ENCODE measurements at regions of chr16 and their contacts with region 1.

Region 1: GRCh38 chr16:29973384-29974246 is at the start of gene TAOK2:
- DNase-seq: peak; percentile 96
- H3K4me3 Mint-ChIP-seq: peak within 1 kb of the TSS; percentile 87
- H3K27ac Mint-ChIP-seq: peak within 1 kb of the TSS; percentile 92
- H3K4me1 Mint-ChIP-seq: peaks cover 35% of the 10 kb centered on the region
- H3K27me3 Mint-ChIP-seq: no peaks in the 10 kb centered on the region
- total RNA-seq, gene TAOK2: 47.7 to 48.8 TPM

Region 2: DNA sequence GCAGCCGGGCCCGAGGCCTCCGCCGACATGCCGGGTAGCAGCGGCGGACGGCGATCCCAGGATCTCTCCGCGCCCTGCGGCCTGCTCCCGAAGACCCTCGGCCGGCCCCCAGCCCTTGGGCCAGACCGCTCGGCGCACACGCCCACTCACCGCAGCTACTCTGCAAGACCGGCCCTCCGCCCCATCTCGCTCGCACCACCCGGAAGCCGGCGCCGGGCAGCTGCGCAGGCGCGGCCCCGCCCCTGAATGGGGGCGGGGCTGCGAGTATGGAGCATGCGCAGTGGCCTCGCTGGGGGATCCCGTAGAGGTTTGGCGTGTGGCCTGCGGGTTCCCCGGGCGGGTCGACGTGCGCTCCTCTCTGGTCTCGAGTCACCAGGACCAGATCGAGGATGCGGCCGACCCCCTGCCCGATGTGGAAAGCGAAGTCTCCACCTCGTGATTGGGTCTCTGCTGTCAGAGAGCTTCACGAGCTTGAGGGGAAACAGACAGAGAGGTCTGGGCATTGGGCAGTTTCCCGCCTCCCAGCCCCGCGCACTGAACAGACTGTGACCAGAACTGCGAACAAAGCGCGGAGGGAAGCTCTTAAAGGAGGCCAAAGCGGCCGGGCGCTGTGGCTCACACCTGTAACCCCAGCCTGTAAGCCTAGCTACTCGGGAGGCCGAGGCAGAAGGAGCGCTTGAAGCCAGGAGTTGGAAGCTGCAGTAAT is 47.5 kb before region 1 on chr16 and contains the start of gene KCTD13:
- CTCF ChIA-PET with region 1: no interaction called
- POLR2A ChIA-PET with region 1: no interaction called
- DNase-seq: peak; percentile 86
- H3K4me3 Mint-ChIP-seq: peak within 1 kb of the TSS; percentile 89
- H3K27ac Mint-ChIP-seq: peak within 1 kb of the TSS; percentile 94
- H3K4me1 Mint-ChIP-seq: peaks cover 36% of the 10 kb centered on the region
- H3K27me3 Mint-ChIP-seq: no peaks in the 10 kb centered on the region
- total RNA-seq, gene KCTD13: 28.4 to 36.1 TPM

Region 3: GRCh38 chr16:29961479-29962343 is 11.9 kb before region 1 on chr16 and contains the start of gene TMEM219:
- CTCF ChIA-PET with region 1: interaction called, 26 read pairs
- POLR2A ChIA-PET with region 1: interaction called, 6 read pairs
- DNase-seq: peak; percentile 91
- H3K4me3 Mint-ChIP-seq: peak within 1 kb of the TSS; percentile 88
- H3K27ac Mint-ChIP-seq: peak within 1 kb of the TSS; percentile 91
- H3K4me1 Mint-ChIP-seq: peaks cover 19% of the 10 kb centered on the region
- H3K27me3 Mint-ChIP-seq: no peaks in the 10 kb centered on the region
- total RNA-seq, gene TMEM219: 57.8 to 60.5 TPM

Measured in activated CD4-positive, alpha-beta T cell treated with anti-CD3 and anti-CD28 coated beads, Interleukin-2, amount 10 ng/mL, durations not matched to agents 7 days and 5 days (primary cell).